ENCODE measurements at regions of chr16 and their contacts with region 1.

Region 1: GRCh38 chr16:361872-362701 is 8.3 kb downstream of the MRPL28 start:
- DNase-seq: peak; percentile 81
- H3K4me3 Mint-ChIP-seq: no peak overlapping the region
- H3K27ac Mint-ChIP-seq: no peak overlapping the region
- H3K4me1 Mint-ChIP-seq: peaks cover 5% of the 10 kb centered on the region
- H3K27me3 Mint-ChIP-seq: no peaks in the 10 kb centered on the region

Region 2: DNA sequence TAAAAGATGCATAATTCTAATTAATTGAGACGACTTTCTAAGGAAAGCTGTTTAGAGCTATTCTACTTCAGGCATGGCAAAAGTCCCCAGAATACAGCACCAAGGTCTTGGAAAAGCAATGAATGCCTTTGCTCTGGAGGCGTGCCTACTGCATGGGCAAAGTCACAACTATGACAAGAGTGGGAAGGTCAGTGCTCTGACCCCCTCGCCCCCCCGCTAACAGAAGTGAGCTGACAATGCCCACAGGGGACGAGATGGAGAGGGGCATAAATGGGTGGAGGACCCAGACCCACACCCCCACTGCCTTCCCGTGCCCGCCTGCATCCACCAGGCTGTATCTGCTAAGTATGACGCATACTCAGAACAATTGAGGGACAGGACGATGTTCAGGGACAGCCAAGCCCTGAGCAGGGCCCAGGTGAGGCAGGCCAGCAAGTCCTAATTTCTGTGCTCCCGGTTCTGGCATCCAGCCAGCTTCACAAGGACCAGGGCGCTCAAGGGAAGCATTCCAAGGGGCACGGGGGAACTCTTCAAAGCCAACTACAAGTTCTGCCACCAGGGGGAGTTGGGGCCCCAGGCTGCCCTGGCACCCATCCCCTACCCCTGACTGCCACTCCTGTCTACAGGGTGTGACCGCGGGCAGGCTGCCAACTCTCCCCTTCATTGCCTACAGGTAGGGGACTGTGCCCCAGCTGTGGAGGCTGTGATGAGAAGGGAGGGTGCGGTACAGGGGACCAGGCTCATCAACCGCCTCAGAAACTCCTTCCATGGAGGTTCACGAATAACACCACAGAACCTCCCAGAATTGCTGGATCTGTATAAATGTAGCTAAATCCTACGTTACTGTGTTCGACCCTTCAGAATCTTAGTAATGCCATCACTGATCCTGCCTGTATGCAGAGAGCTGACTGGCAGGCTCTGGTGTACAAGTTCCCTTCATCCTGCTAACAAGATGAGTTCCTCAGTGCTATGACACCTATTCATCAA is 244.4 kb before region 1 on chr16:
- CTCF ChIA-PET with region 1: interaction called, 17 read pairs
- POLR2A ChIA-PET with region 1: no interaction called
- DNase-seq: peak; percentile 67
- H3K4me3 Mint-ChIP-seq: no peak overlapping the region
- H3K27ac Mint-ChIP-seq: no peak overlapping the region
- H3K4me1 Mint-ChIP-seq: peaks cover 12% of the 10 kb centered on the region
- H3K27me3 Mint-ChIP-seq: no peaks in the 10 kb centered on the region

Region 3: GRCh38 chr16:234468-235305 is 127.4 kb before region 1 on chr16 and contains the start of gene FAM234A:
- CTCF ChIA-PET with region 1: interaction called, 10 read pairs
- POLR2A ChIA-PET with region 1: no interaction called
- DNase-seq: peak; percentile 95
- H3K4me3 Mint-ChIP-seq: peak within 1 kb of the TSS; percentile 91
- H3K27ac Mint-ChIP-seq: peak within 1 kb of the TSS; percentile 94
- H3K4me1 Mint-ChIP-seq: peaks cover 20% of the 10 kb centered on the region
- H3K27me3 Mint-ChIP-seq: no peaks in the 10 kb centered on the region
- total RNA-seq, gene FAM234A: 26.9 to 31.5 TPM

Region 4: DNA sequence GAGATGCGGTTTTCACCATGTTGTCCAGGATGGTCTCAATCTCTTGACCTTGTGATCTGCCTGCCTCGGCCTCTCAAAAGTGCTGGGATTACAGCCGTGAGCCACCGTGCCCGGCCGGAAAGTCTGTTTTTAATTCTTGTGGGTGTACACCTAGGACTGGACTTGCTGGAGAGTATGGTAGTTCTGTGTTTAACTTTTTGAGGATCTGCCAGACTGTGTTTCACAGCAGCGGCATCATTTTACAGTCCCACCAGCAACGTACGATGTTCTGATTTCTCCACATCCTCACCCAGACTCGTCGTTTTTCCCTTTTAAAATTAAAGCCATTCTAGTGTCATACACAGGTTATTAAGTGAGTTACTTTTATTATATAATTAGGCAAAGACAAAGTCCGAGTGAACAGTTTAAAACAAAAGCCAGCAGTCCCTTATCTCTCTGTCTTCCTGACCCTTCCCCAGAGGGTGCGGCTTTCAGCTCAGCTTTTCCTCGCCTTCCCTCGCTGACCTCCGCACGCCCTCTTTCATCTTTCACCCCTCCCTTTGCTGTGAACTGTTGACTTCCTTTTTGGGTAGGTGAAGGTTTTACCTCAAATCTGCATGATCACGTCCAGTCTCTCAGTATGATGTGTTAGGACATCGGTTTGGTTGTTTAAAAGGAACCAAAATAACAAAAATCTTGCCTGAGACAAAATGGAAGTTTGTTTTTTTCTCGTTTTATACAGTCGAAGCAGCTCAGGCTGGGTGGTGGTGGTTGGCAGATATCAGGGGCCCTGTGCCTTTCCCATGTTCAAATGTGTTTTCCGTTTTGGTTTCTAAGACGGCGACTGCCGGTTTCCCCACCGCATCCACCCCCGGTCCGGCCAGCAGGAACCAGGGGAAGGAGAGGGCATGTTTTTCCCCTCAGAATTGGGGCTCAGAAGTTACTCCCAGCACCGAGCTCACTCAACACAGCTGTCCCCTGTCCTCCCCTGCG is 109.4 kb before region 1 on chr16:
- CTCF ChIA-PET with region 1: interaction called, 10 read pairs
- POLR2A ChIA-PET with region 1: no interaction called
- DNase-seq: peak; percentile 51
- H3K4me3 Mint-ChIP-seq: peak overlapping the region; percentile 65
- H3K27ac Mint-ChIP-seq: peak overlapping the region; percentile 90
- H3K4me1 Mint-ChIP-seq: peaks cover 39% of the 10 kb centered on the region
- H3K27me3 Mint-ChIP-seq: no peaks in the 10 kb centered on the region

Region 5: DNA sequence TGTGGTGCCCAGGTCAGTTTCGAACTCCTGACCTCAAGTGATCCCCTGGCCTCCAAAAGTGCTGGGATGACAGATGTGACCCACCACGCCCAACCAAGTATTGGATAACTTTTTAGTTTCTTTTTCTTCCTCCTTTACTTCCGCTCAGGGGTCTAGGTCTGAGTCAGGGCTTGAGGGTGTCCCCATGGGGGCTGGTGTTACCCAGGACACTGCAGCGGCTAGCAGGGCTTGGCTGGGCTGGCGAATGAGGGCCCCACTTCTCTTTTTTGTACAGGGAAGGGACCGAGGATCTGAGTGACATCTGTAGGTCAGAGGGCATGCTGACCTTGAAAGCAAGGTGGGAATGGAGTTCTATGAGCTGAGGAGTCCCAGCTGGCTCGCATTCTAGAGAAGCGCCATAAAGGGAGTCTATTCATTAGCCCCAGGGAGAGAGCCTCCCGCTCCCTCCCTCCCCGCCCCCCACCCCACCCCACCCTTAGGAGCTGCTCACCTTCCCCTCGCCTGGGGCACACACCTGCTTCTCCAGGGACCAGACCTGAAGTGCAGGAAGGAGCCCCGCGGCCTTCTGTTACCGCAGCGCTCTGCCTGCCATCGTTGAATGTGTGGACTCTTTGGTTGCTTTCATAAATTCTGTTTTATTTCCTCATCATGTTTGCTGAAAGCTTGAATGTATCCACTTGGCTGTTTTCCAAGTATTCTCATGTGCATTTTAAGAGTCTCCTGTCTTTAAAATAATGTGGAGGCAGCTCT is 88.5 kb after region 1 on chr16:
- CTCF ChIA-PET with region 1: no interaction called
- POLR2A ChIA-PET with region 1: no interaction called
- DNase-seq: no peak
- H3K4me3 Mint-ChIP-seq: no peak overlapping the region
- H3K27ac Mint-ChIP-seq: no peak overlapping the region
- H3K4me1 Mint-ChIP-seq: peaks cover 5% of the 10 kb centered on the region
- H3K27me3 Mint-ChIP-seq: no peaks in the 10 kb centered on the region

Region 6: GRCh38 chr16:578870-579405 is 216.9 kb after region 1 on chr16:
- CTCF ChIA-PET with region 1: no interaction called
- POLR2A ChIA-PET with region 1: no interaction called
- DNase-seq: peak; percentile 77
- H3K4me3 Mint-ChIP-seq: no peak overlapping the region
- H3K27ac Mint-ChIP-seq: no peak overlapping the region
- H3K4me1 Mint-ChIP-seq: peaks cover 3% of the 10 kb centered on the region
- H3K27me3 Mint-ChIP-seq: no peaks in the 10 kb centered on the region

Measured in activated CD4-positive, alpha-beta memory T cell treated with anti-CD3 and anti-CD28 coated beads, Interleukin-2, amount 10 ng/mL, durations not matched to agents 7 days and 5 days (primary cell).